ENCODE measurements at regions of chr20 and their contacts with region 1.

Region 1: GRCh38 chr20:47501483-47502270 is at the start of gene NCOA3:
- DNase-seq: peak; percentile 93
- ATAC-seq: peak; percentile 91
- H3K4me3 ChIP-seq: peak within 1 kb of the TSS; percentile 90 to 99 (median 97)
- H3K4me3 Mint-ChIP-seq: peak within 1 kb of the TSS; percentile 100
- H3K27ac ChIP-seq: peak within 1 kb of the TSS; percentile 90 to 95
- H3K27ac Mint-ChIP-seq: peak within 1 kb of the TSS; percentile 100
- H3K4me1 ChIP-seq: peaks cover 28 to 33% of the 10 kb centered on the region in 2 donors
- H3K4me1 Mint-ChIP-seq: peaks cover 48% of the 10 kb centered on the region
- H3K27me3 ChIP-seq: no peaks in the 10 kb centered on the region
- H3K27me3 Mint-ChIP-seq: no peaks in the 10 kb centered on the region
- CTCF ChIP-seq: peak; percentile 59
- total RNA-seq, gene NCOA3: 289 and 309 TPM in 2 replicates

Region 2: GRCh38 chr20:47392015-47392720 is 109.5 kb before region 1 on chr20:
- CTCF ChIA-PET with region 1: no interaction called
- POLR2A ChIA-PET with region 1: interaction called, 16 read pairs
- intact Hi-C with region 1: no loop called
- DNase-seq: peak; percentile 54
- ATAC-seq: peak; percentile 71
- H3K4me3 ChIP-seq: no peak overlapping the region
- H3K4me3 Mint-ChIP-seq: peak overlapping the region; percentile 57
- H3K27ac ChIP-seq: peak overlapping the region; percentile 46 to 52
- H3K27ac Mint-ChIP-seq: peak overlapping the region; percentile 83
- H3K4me1 ChIP-seq: peaks cover 28 to 34% of the 10 kb centered on the region in 2 donors
- H3K4me1 Mint-ChIP-seq: peaks cover 37% of the 10 kb centered on the region
- H3K27me3 ChIP-seq: no peaks in the 10 kb centered on the region
- H3K27me3 Mint-ChIP-seq: no peaks in the 10 kb centered on the region
- CTCF ChIP-seq: no peak

Region 3: DNA sequence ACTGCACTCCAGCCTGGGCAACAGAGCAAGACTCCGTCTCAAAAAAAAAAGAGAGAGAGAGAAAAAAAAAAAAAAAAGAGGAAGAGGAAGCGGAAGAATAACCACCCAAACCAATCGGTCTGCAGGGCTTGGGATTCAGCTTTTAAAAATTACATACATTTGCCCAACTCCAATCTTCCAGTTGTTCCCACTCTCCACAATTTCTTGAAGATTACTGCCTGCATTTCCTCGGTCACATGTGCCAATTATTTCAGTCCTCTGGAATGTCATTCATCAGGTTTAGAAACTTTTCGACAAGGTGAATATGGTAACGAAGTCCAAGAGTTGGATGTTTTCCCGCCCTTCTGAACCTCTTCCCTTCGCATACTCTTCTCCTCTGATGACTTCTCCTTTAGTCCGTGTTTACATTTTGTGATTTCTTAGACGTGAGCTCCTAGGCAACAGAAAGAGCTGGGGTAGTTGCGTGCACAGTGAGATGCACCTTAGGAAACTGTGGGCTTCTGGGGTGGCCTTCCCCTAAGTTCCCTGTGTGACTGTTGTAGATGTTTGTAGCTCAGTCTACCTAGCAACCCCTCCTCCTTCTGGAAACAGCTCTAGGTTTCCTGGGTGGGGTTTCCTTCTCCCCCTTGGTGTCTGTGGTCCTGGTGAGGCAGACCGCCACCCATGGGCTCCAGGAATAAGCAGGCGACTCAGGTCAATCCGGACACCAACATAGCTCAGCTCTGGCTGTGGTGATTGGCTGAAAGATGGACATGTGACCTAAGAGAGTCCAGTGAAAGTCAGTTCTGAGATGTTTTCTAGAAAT is 62.9 kb before region 1 on chr20:
- CTCF ChIA-PET with region 1: interaction called, 5 read pairs
- POLR2A ChIA-PET with region 1: interaction called, 16 read pairs
- intact Hi-C with region 1: loop called (anchors 5 kb)
- DNase-seq: peak; percentile 87
- ATAC-seq: peak; percentile 70
- H3K4me3 ChIP-seq: peak overlapping the region in 1 of 5 experiments; percentile 11
- H3K4me3 Mint-ChIP-seq: peak overlapping the region; percentile 61
- H3K27ac ChIP-seq: peak overlapping the region; percentile 87 to 88
- H3K27ac Mint-ChIP-seq: peak overlapping the region; percentile 90
- H3K4me1 ChIP-seq: peaks cover 41 to 56% of the 10 kb centered on the region in 2 donors
- H3K4me1 Mint-ChIP-seq: peaks cover 48% of the 10 kb centered on the region
- H3K27me3 ChIP-seq: no peaks in the 10 kb centered on the region
- H3K27me3 Mint-ChIP-seq: no peaks in the 10 kb centered on the region
- CTCF ChIP-seq: no peak

Region 4: DNA sequence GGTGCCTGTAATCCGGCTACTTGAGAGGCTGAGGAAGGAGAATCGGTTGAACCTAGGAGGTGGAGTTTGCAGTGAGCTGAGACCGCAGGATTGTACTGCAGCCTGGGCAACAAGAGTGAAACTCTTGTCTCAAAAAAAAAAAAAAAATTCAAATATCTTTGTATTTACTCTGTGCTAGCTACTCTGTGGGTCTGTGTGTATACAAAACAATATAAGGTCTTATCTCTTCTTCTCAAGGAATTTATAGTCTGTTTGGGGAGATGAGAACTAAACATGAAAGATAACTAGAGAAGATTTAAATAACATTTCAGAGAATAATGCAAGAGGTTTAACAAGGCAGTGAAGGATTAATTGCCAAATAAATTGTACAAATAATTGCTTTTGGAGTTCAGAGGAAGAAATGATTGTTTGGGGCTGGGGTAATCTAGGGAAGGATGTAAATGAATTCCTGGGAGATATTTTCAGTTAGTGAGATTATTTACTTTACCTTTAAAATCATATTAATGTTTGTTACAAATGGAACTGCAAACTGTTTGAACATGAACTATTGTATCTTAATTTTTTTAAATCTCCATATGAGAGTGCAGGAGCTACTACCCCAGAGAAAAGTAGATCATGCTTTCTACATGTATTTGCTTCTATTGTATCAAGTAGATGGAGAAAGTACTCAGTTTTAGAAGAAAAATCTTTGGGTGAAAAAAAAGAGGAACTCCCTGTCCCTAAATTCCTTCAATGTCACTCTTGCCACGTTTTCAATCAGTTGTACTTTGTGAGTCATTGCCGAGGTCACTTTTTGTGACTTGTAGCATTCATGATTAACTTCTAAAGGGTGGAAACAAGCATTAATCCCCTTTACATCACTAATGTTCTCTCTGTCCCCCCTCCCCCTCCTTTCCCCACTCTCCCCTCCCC is 39.0 kb after region 1 on chr20:
- CTCF ChIA-PET with region 1: no interaction called
- POLR2A ChIA-PET with region 1: no interaction called
- intact Hi-C with region 1: loop called (anchors 5 kb)
- DNase-seq: peak; percentile 30
- ATAC-seq: no peak
- H3K4me3 ChIP-seq: no peak overlapping the region
- H3K4me3 Mint-ChIP-seq: peak overlapping the region; percentile 24
- H3K27ac ChIP-seq: peak overlapping the region in 1 of 2 donors; percentile 73
- H3K27ac Mint-ChIP-seq: peak overlapping the region; percentile 10
- H3K4me1 ChIP-seq: peaks cover 76 to 90% of the 10 kb centered on the region in 2 donors
- H3K4me1 Mint-ChIP-seq: peaks cover 84% of the 10 kb centered on the region
- H3K27me3 ChIP-seq: no peaks in the 10 kb centered on the region
- H3K27me3 Mint-ChIP-seq: no peaks in the 10 kb centered on the region
- CTCF ChIP-seq: no peak

Measured in B cell (primary cell).